ENCODE measurements at regions of chr1 and their contacts with region 1.

Region 1: DNA sequence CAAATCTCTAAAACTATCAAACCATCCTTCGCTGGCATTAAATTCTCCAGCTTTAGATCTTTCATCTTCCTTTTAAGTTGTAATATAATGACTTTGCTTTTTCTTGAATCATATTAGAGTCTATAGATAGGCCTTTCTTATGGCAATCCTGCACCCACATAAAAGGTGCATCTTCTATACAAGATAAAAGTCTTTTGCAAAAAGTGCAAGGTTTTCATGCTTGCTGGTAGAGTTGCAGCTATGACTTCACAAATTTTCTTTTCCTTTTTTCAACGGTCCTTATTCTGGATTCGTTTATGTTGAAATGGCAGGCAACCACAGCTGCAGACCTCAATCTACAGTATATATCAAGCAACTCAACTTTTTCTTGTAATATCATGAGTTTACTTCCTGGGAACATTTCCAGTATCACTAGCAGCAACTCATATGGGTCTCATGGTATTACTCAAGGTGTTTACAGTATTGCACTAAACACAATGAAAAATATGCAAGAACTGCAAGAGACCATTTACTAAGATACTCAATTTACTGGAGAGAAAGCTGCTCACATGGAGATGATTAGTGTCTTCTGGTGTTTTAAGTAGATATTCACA is 22.1 kb downstream of the OMA1 start:
- DNase-seq: no peak
- ATAC-seq: no peak
- H3K4me3 ChIP-seq: no peak overlapping the region
- H3K27ac ChIP-seq: peak overlapping the region in 1 of 2 donors; percentile 13
- H3K4me1 ChIP-seq: peaks cover 0 to 6% of the 10 kb centered on the region in 2 donors
- H3K27me3 ChIP-seq: no peaks in the 10 kb centered on the region
- CTCF ChIP-seq: no peak

Region 2: DNA sequence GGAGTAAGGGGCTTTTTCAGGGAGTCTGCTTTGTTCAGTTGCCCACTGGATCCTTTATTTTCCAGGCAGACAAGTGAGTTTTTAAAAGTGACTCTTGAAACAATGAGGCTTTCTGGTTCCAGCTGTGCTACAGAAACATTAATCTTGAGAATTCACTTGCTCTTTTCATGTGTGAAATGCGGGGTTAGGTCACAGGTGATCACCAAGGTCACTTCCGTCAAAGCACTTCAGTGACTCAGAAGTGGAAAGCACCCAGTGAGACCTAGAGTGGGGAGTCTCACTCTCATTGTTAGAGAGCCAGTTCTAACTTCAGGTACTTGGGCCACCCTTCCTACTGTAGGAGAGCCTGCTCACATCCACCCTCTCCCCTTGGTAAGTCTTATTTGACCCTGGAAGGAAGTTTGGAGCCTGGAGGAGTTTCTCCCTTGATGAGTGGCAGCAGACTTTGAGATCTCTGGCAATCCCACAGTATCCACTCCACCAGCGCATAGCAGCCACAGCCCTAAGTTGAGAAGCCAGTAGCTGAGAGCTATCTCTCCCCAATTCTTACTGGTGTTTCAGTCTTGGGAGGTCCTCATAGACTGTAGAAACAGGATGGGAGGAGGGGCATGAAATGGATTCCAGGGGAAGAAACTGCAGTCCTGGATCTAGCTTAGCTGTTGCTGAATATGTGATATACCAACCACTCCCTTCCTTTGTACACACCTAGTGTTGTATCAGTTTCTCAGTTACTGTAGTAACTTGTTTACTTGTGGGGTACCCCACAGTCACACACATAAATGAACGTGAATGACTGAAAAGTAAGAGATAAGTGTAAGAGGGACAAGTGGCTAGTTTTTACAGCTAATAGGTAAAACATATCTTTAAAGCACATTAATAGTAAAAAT is 49.5 kb after region 1 on chr1:
- intact Hi-C with region 1: no loop called
- DNase-seq: no peak
- ATAC-seq: peak; percentile 25
- H3K4me3 ChIP-seq: peak overlapping the region in 1 of 2 donors; percentile 57
- H3K27ac ChIP-seq: peak overlapping the region; percentile 41 to 85
- H3K4me1 ChIP-seq: peaks cover 4 to 60% of the 10 kb centered on the region in 2 donors
- H3K27me3 ChIP-seq: peaks cover 6 to 23% of the 10 kb centered on the region in 2 donors
- CTCF ChIP-seq: no peak

Region 3: GRCh38 chr1:58584082-58584895 is 59.8 kb after region 1 on chr1:
- intact Hi-C with region 1: no loop called
- DNase-seq: peak in 3 of 4 donors; percentile 75 to 85 (median 83)
- ATAC-seq: peak; percentile 89
- H3K4me3 ChIP-seq: peak overlapping the region in 1 of 2 donors; percentile 5
- H3K27ac ChIP-seq: peak overlapping the region; percentile 69 to 84
- H3K4me1 ChIP-seq: peaks cover 24 to 33% of the 10 kb centered on the region in 2 donors
- H3K27me3 ChIP-seq: no peaks in the 10 kb centered on the region
- CTCF ChIP-seq: no peak

Region 4: DNA sequence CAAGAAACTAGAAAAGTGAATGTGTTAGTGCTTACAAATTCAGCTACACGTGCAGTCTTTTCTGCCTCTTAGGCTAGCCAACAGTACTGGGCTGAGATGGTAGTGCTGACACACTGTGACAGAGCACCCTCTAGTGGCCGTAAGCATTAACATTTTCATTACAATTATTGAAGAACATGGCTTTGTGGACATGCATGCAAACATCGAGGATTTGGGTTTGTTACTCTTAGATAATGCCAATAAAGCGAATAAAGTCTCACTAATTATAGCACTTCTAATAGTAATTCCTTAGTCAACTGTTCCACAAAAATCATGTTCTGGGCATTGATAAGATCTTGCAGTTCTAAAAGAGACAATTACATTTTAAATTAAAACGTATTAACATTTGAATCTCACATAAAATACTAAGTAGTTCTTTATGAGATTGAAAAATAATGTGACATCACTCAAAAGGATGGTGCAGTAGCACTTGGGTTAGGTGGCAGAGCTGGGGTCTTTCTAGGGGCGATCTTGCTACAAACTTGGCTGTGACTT is 128.3 kb after region 1 on chr1:
- intact Hi-C with region 1: loop called in 1 of 2 experiments (anchors 5 kb)
- DNase-seq: peak in 3 of 4 donors; percentile 50 to 87 (median 73)
- ATAC-seq: peak; percentile 99
- H3K4me3 ChIP-seq: no peak overlapping the region
- H3K27ac ChIP-seq: no peak overlapping the region
- H3K4me1 ChIP-seq: peaks cover 0 to 17% of the 10 kb centered on the region in 2 donors
- H3K27me3 ChIP-seq: no peaks in the 10 kb centered on the region
- CTCF ChIP-seq: peak; percentile 63 to 79

Region 5: GRCh38 chr1:59020151-59020997 is 495.9 kb after region 1 on chr1:
- intact Hi-C with region 1: no loop called
- DNase-seq: peak in 2 of 4 donors; percentile 66 to 72
- ATAC-seq: peak; percentile 93
- H3K4me3 ChIP-seq: peak overlapping the region in 1 of 2 donors; percentile 26
- H3K27ac ChIP-seq: peak overlapping the region; percentile 79 to 80
- H3K4me1 ChIP-seq: peaks cover 5 to 23% of the 10 kb centered on the region in 2 donors
- H3K27me3 ChIP-seq: no peaks in the 10 kb centered on the region
- CTCF ChIP-seq: no peak

Measured in left lung (tissue), 14 donors.